Activated CD4-positive, alpha-beta memory T cell treated with anti-CD3 and anti-CD28 coated beads for 36 hours (primary cell): ENCODE measurements at regions of chr2 and their contacts with region 1.

Region 1: GRCh38 chr2:73293534-73294171 is at the start of gene EGR4:
- DNase-seq: peak; percentile 93
- H3K4me3 Mint-ChIP-seq: peak within 1 kb of the TSS; percentile 68
- H3K27ac Mint-ChIP-seq: no peak within 1 kb of the TSS
- H3K4me1 Mint-ChIP-seq: peaks cover 7% of the 10 kb centered on the region
- H3K27me3 Mint-ChIP-seq: peaks cover 64% of the 10 kb centered on the region
- total RNA-seq, gene EGR4: 0.24 to 0.34 TPM

Region 2: DNA sequence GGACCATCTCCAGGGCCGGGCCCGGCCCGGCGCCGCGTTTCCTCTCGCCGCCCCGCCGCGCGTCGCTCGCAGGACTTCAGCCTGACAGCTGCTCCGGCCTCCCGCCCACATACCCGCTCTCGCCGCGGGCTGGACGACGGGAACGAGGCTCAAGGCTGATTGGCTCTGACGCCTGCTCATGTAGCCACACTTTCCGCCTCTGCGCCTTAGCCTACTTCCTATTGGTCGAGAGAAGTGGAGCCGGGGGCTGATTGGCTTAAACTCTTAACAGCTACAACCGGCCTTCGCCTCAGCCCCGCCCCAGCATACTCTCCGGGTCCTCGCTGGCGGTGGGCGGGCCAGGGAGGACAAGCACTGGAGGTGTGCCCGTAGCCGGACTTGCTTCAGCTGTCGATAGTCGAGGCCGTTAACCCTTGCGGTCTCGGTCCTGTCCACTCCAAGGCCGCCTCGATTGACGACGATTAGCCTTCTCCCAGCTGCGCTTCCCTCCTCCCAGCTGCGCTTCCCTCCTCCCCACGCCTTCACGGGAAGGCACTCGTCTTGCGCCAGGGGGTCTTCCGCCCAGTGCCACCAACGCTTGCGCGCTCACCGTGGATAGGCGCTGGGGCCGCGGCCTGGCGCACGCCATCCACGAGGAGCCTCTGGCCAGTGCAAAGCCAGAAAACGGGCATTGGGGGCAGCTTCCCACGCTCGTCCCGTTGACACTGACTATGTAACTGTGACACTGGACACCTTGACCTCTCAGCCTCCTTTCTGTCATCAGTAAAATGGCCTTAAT is 60.3 kb before region 1 on chr2 and contains the start of gene PRADC1:
- CTCF ChIA-PET with region 1: interaction called, 70 read pairs
- POLR2A ChIA-PET with region 1: interaction called, 4 read pairs
- intact Hi-C with region 1: loop called (anchors 1 kb)
- DNase-seq: peak; percentile 97
- H3K4me3 Mint-ChIP-seq: peak within 1 kb of the TSS; percentile 87
- H3K27ac Mint-ChIP-seq: peak within 1 kb of the TSS; percentile 80
- H3K4me1 Mint-ChIP-seq: peaks cover 29% of the 10 kb centered on the region
- H3K27me3 Mint-ChIP-seq: peaks cover 1% of the 10 kb centered on the region
- total RNA-seq, gene PRADC1: 12.9 to 13.6 TPM

Region 3: GRCh38 chr2:73268830-73269685 is 24.6 kb before region 1 on chr2:
- CTCF ChIA-PET with region 1: interaction called, 6 read pairs
- POLR2A ChIA-PET with region 1: interaction called, 6 read pairs
- intact Hi-C with region 1: loop called (anchors 2 kb)
- DNase-seq: peak; percentile 84
- H3K4me3 Mint-ChIP-seq: peak overlapping the region; percentile 30
- H3K27ac Mint-ChIP-seq: no peak overlapping the region
- H3K4me1 Mint-ChIP-seq: peaks cover 19% of the 10 kb centered on the region
- H3K27me3 Mint-ChIP-seq: no peaks in the 10 kb centered on the region

Region 4: DNA sequence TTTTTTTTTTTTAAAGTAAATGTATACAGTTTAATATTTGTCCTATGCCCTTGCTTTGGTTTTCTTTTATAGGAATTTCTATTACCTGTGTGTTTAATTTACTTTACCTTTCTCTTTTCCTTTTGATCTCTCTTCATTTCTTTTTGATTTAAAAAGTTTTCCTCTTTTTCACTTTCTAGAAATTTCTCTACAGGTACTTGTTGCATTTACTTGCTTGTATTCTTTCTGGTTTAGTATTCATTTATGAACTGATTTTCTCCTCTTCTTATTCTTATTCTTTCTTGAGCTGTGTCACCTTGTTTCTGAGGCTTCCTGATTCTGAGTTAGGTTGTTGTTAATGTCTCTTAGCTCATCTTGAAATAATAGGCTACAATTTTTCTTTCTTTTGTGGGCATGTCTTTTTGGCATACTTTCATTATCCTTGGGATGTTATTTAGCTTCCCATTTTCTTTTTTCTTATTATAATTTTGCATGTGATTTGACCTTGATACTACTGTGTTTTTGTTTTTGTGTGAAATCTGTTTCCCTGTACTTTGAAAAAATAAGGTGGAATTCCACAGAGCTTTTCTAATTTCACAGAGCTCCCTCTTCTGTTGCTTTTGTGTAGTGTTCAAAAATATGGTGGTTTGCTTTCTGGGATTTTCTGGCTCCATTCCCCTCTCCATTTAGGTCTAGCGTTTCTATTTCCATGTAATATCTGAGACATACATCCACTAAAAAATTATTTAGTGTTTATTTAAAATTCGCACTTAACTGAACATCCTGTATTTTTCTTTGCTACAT is 66.5 kb after region 1 on chr2:
- CTCF ChIA-PET with region 1: no interaction called
- POLR2A ChIA-PET with region 1: no interaction called
- intact Hi-C with region 1: no loop called
- DNase-seq: no peak
- H3K4me3 Mint-ChIP-seq: no peak overlapping the region
- H3K27ac Mint-ChIP-seq: no peak overlapping the region
- H3K4me1 Mint-ChIP-seq: no peaks in the 10 kb centered on the region
- H3K27me3 Mint-ChIP-seq: no peaks in the 10 kb centered on the region

Region 5: DNA sequence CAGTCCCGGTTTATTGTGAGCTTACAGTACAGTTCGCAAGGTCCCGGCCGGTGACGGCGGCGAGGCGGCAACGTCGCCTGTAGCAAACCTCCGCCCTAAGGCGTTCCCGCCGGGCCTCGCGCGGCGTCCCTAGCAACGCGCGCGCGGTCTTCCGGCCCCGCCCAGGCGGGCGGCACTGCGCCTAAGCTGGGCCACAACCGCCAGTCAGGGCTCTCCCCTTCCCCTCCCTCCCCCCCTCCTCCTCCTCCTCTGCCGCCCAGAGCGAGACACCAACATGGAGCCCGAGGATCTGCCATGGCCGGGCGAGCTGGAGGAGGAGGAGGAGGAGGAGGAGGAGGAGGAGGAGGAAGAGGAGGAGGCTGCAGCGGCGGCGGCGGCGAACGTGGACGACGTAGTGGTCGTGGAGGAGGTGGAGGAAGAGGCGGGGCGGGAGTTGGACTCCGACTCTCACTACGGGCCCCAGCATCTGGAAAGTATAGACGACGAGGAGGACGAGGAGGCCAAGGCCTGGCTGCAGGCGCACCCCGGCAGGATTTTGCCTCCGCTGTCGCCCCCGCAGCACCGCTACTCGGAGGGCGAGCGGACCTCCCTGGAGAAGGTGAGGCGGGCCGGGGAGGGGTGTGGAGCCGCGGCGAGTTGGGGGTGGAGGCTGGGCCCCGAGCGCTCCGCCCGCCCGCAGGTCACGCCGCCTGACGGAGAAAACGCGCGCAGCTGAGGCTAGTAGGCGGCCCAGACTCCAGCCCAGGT is 92.1 kb after region 1 on chr2 and contains the start of gene ALMS1:
- CTCF ChIA-PET with region 1: interaction called, 6 read pairs
- POLR2A ChIA-PET with region 1: interaction called, 6 read pairs
- intact Hi-C with region 1: loop called (anchors 1 kb)
- DNase-seq: peak; percentile 94
- H3K4me3 Mint-ChIP-seq: peak within 1 kb of the TSS; percentile 92
- H3K27ac Mint-ChIP-seq: peak within 1 kb of the TSS; percentile 82
- H3K4me1 Mint-ChIP-seq: peaks cover 26% of the 10 kb centered on the region
- H3K27me3 Mint-ChIP-seq: no peaks in the 10 kb centered on the region
- total RNA-seq, gene ALMS1: 20.4 to 22.7 TPM